AG04450 (cell line): ENCODE measurements at regions of chr1 and their contacts with region 1.

Region 1: DNA sequence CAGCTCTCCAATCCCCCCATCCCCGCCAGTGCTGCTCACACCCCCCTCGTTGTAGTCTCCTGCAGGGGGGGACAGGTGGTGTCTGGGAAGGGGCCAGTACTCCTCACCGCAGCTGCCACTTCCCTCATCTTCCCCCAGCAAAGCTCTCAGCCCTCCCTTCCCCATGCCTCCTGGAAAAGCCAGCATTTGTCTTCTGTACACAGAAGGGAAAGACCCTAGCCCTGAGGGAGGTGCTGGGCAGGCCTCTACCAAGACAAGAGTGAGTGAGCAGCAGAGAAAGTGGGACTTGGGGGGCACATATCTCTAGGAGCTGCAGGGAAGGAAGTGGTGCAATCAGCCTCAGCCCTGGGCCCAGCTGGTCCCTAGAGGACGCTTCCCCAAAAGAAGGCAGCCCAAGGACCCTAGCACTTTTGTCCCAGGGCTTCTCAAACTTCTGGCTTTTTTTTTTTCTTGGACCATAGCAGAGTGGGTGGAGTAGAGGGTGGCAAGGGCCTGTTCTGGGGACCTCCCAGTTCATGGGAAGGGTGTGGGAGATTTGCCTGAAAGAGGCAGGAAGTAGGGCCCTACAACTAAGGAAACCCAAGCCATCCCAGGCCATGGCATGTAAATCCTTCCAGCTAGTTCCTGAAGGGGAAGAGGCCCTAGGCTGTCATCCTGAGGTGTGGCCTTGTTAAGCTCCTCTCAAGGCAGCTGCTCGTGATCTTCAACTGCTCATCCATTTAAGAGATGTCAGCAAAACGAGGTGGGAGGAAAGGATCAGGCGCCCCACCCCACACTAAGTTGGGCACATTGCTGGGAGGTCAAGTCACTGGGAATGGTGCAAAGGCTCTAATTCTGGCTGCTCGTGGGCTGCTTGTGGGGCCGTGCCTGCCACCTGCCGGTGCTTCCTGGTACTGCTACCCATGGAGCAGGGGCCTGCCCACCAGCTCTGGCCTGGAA is 12.6 kb downstream of the ZC3H12A start:
- DNase-seq: no peak
- H3K4me3 ChIP-seq: no peak overlapping the region
- H3K27ac ChIP-seq: peak overlapping the region; percentile 61
- H3K27me3 ChIP-seq: no peaks in the 10 kb centered on the region
- CTCF ChIP-seq: peak; percentile 99

Region 2: GRCh38 chr1:37449936-37450335 is 37.0 kb before region 1 on chr1:
- CTCF ChIA-PET with region 1: interaction called, 180 read pairs
- POLR2A ChIA-PET with region 1: interaction called, 4 read pairs
- DNase-seq: no peak
- H3K4me3 ChIP-seq: no peak overlapping the region
- H3K27ac ChIP-seq: no peak overlapping the region
- H3K27me3 ChIP-seq: peaks cover 7% of the 10 kb centered on the region
- CTCF ChIP-seq: no peak

Region 3: GRCh38 chr1:37458528-37458927 is 28.4 kb before region 1 on chr1:
- CTCF ChIA-PET with region 1: interaction called, 180 read pairs
- POLR2A ChIA-PET with region 1: interaction called, 4 read pairs
- DNase-seq: no peak
- H3K4me3 ChIP-seq: no peak overlapping the region
- H3K27ac ChIP-seq: no peak overlapping the region
- H3K27me3 ChIP-seq: no peaks in the 10 kb centered on the region
- CTCF ChIP-seq: no peak

Region 4: GRCh38 chr1:37474046-37474759 is 12.7 kb before region 1 on chr1 and contains the start of gene ZC3H12A:
- CTCF ChIA-PET with region 1: interaction called, 74 read pairs
- POLR2A ChIA-PET with region 1: interaction called, 44 read pairs
- DNase-seq: peak; percentile 55
- H3K4me3 ChIP-seq: peak within 1 kb of the TSS; percentile 89
- H3K27ac ChIP-seq: peak within 1 kb of the TSS; percentile 75
- H3K27me3 ChIP-seq: no peaks in the 10 kb centered on the region
- CTCF ChIP-seq: no peak
- polyA plus RNA-seq, gene ZC3H12A: 4.3 and 6.4 TPM in 2 replicates

Region 5: GRCh38 chr1:37498872-37499617 is 12.1 kb after region 1 on chr1:
- CTCF ChIA-PET with region 1: interaction called, 81 read pairs
- POLR2A ChIA-PET with region 1: interaction called, 3 read pairs
- DNase-seq: no peak
- H3K4me3 ChIP-seq: no peak overlapping the region
- H3K27ac ChIP-seq: no peak overlapping the region
- H3K27me3 ChIP-seq: no peaks in the 10 kb centered on the region
- CTCF ChIP-seq: no peak

Region 6: DNA sequence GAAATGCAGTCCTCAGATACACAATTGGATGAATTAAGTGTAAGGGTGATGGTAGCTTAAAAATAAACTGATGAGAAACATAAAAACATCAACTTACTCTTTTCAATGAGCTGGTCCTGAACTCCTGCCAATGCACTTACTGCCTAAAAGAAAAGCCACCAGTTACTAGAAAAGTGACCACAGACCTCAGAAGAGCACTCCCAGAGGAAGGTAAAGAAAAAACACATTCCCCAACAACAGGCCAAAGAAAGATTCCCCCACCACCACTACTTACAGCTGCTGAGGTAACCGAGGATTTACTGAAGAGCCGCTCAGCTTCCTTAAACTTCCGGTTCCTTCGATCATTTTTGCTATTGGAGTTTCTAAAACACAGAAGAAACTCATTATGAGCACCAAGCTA is 22.2 kb after region 1 on chr1:
- CTCF ChIA-PET with region 1: interaction called, 40 read pairs
- POLR2A ChIA-PET with region 1: interaction called, 5 read pairs
- DNase-seq: no peak
- H3K4me3 ChIP-seq: no peak overlapping the region
- H3K27ac ChIP-seq: no peak overlapping the region
- H3K27me3 ChIP-seq: no peaks in the 10 kb centered on the region
- CTCF ChIP-seq: peak; percentile 37